Activated T-helper 1 cell treated with anti-CD3 and anti-CD28 coated beads, Interleukin-12 subunit alpha, Interleukin-12 subunit beta, Interleukin-2, Interleukin-4 antibody, amounts not matched to agents 30 ng/mL and 10 ng/mL and 1 ng/mL, durations not matched to agents 14 hours and 24 hours and 36 hours (primary cell): ENCODE measurements at regions of chr7 and their contacts with region 1.

Region 1: GRCh38 chr7:139340037-139340807 is 915 bp upstream of the FMC1 start:
- DNase-seq: peak; percentile 97
- H3K4me3 Mint-ChIP-seq: peak overlapping the region; percentile 91
- H3K27ac Mint-ChIP-seq: peak overlapping the region; percentile 100
- H3K4me1 Mint-ChIP-seq: peaks cover 31% of the 10 kb centered on the region
- H3K27me3 Mint-ChIP-seq: peaks cover 8% of the 10 kb centered on the region

Region 2: GRCh38 chr7:139035586-139036353 is 304.5 kb before region 1 on chr7 and contains the start of gene ZC3HAV1L:
- intact Hi-C with region 1: loop called (anchors 5 kb)
- DNase-seq: peak; percentile 48
- H3K4me3 Mint-ChIP-seq: peak within 1 kb of the TSS; percentile 91
- H3K27ac Mint-ChIP-seq: peak within 1 kb of the TSS; percentile 85
- H3K4me1 Mint-ChIP-seq: peaks cover 38% of the 10 kb centered on the region
- H3K27me3 Mint-ChIP-seq: no peaks in the 10 kb centered on the region
- total RNA-seq, gene ZC3HAV1L: 29.6 and 31.5 TPM in 2 replicates

Region 3: GRCh38 chr7:139109188-139109982 is 230.8 kb before region 1 on chr7 and contains the start of gene ZC3HAV1:
- intact Hi-C with region 1: loop called (anchors 1 kb)
- DNase-seq: peak; percentile 87
- H3K4me3 Mint-ChIP-seq: peak within 1 kb of the TSS; percentile 97
- H3K27ac Mint-ChIP-seq: peak within 1 kb of the TSS; percentile 98
- H3K4me1 Mint-ChIP-seq: peaks cover 38% of the 10 kb centered on the region
- H3K27me3 Mint-ChIP-seq: no peaks in the 10 kb centered on the region
- total RNA-seq, gene ZC3HAV1: 89.7 and 90.0 TPM in 2 replicates

Region 4: GRCh38 chr7:139230774-139231512 is 109.3 kb before region 1 on chr7 and contains the start of gene UBN2:
- intact Hi-C with region 1: loop called (anchors 1 kb)
- DNase-seq: peak; percentile 89
- H3K4me3 Mint-ChIP-seq: peak within 1 kb of the TSS; percentile 100
- H3K27ac Mint-ChIP-seq: peak within 1 kb of the TSS; percentile 97
- H3K4me1 Mint-ChIP-seq: peaks cover 32% of the 10 kb centered on the region
- H3K27me3 Mint-ChIP-seq: peaks cover 27% of the 10 kb centered on the region
- total RNA-seq, gene UBN2: 14.7 and 15.6 TPM in 2 replicates